Activated CD4-positive, alpha-beta T cell treated with anti-CD3 and anti-CD28 coated beads, Interleukin-2, amount 10 ng/mL, durations not matched to agents 24 days and 14 days (primary cell): ENCODE measurements at regions of chr9 and their contacts with region 1.

Region 1: GRCh38 chr9:114681594-114682332 is at the start of gene TEX48:
- DNase-seq: peak; percentile 95
- H3K4me3 Mint-ChIP-seq: peak within 1 kb of the TSS; percentile 39
- H3K27ac Mint-ChIP-seq: peak within 1 kb of the TSS; percentile 97
- H3K4me1 Mint-ChIP-seq: peaks cover 66% of the 10 kb centered on the region
- H3K27me3 Mint-ChIP-seq: no peaks in the 10 kb centered on the region
- total RNA-seq, gene TEX48: 0.52 and 0.56 TPM in 2 replicates

Region 2: DNA sequence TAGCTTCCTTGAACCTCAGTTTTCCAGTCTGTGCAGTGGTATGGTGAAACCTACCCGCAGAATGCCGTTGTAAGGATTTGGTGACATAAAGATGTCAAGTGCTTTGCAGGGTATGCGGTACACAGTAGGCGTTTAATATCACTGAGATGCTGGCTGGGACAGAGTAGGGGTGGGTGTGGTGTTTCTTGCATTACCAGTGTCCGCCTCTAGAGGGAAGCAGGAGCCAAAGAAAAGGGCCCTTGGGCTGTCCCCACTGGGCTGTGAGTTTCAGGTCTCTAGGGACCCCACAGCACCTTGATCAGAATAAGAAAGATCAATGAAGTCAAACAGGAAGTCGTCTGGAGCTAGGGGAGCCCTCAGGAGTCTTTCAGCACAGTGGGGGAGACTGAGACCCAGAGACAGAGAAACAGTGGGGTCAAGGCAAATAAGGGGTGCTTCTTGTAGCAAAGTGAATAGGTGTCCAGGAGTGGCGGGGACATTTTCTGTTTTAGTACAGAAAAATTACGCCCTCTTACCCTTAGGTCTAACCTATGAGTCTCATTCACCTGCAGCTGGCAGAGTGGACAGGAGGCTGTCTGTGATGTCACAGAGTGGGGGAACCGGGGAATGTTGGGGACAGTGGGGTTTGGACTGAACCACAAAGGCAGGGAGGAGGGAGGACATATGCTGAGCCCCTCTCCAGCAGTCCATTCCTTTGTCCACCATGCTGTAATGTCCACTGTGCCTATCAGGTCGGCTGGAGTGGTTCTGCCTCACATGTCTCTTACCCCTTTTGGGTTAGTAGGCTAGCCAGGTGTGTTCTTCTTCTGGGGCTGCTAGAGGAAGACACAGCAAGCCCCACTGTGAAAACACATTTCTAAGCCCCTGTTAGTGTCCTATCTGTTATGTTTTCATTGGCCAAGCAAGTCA is 19.4 kb before region 1 on chr9:
- intact Hi-C with region 1: loop called (anchors 2 kb)
- DNase-seq: peak; percentile 91
- H3K4me3 Mint-ChIP-seq: no peak overlapping the region
- H3K27ac Mint-ChIP-seq: no peak overlapping the region
- H3K4me1 Mint-ChIP-seq: peaks cover 13% of the 10 kb centered on the region
- H3K27me3 Mint-ChIP-seq: peaks cover 14% of the 10 kb centered on the region

Region 3: GRCh38 chr9:114696814-114697544 is 15.2 kb after region 1 on chr9:
- intact Hi-C with region 1: loop called (anchors 1 kb)
- DNase-seq: peak; percentile 92
- H3K4me3 Mint-ChIP-seq: peak overlapping the region; percentile 79
- H3K27ac Mint-ChIP-seq: peak overlapping the region; percentile 100
- H3K4me1 Mint-ChIP-seq: peaks cover 79% of the 10 kb centered on the region
- H3K27me3 Mint-ChIP-seq: no peaks in the 10 kb centered on the region

Region 4: GRCh38 chr9:114718801-114719221 is 37.0 kb after region 1 on chr9:
- intact Hi-C with region 1: loop called (anchors 5 kb)
- DNase-seq: peak; percentile 98
- H3K4me3 Mint-ChIP-seq: peak overlapping the region; percentile 74
- H3K27ac Mint-ChIP-seq: peak overlapping the region; percentile 97
- H3K4me1 Mint-ChIP-seq: peaks cover 81% of the 10 kb centered on the region
- H3K27me3 Mint-ChIP-seq: no peaks in the 10 kb centered on the region

Region 5: GRCh38 chr9:114738581-114739316 is 57.0 kb after region 1 on chr9:
- intact Hi-C with region 1: loop called (anchors 1 kb)
- DNase-seq: peak; percentile 91
- H3K4me3 Mint-ChIP-seq: peak overlapping the region; percentile 33
- H3K27ac Mint-ChIP-seq: peak overlapping the region; percentile 93
- H3K4me1 Mint-ChIP-seq: peaks cover 63% of the 10 kb centered on the region
- H3K27me3 Mint-ChIP-seq: no peaks in the 10 kb centered on the region

Region 6: DNA sequence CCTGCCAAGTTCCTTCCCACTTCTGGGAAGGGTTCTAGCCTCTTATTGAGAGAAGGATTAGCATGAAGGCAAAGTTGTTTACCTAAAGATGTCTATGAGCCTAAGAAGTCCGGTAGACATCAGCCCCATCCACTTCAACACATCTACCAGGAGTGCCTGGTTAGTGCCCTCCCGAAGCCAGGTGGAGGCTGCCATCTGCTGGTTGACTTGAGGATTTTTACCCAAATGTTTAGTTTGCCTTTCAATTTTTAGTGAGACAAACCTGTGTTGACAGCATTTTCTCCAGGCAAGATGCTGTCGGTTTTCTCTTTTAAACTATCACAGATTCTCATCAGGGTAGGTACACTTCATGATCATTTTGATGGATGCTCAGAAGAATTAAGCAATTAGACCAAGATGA is 332.2 kb after region 1 on chr9:
- intact Hi-C with region 1: loop called (anchors 1 kb)
- DNase-seq: peak; percentile 93
- H3K4me3 Mint-ChIP-seq: peak overlapping the region; percentile 18
- H3K27ac Mint-ChIP-seq: peak overlapping the region; percentile 77
- H3K4me1 Mint-ChIP-seq: peaks cover 55% of the 10 kb centered on the region
- H3K27me3 Mint-ChIP-seq: peaks cover 2% of the 10 kb centered on the region

Region 7: GRCh38 chr9:115524453-115525059 is 842.8 kb after region 1 on chr9:
- intact Hi-C with region 1: loop called (anchors 5 kb)
- DNase-seq: peak; percentile 76
- H3K4me3 Mint-ChIP-seq: no peak overlapping the region
- H3K27ac Mint-ChIP-seq: no peak overlapping the region
- H3K4me1 Mint-ChIP-seq: no peaks in the 10 kb centered on the region
- H3K27me3 Mint-ChIP-seq: peaks cover 22% of the 10 kb centered on the region